Thyroid gland (tissue), 4 donors: ENCODE measurements at regions of chr13 and their contacts with region 1.

Region 1: GRCh38 chr13:27362064-27362883 is 62.1 kb upstream of the GTF3A start:
- DNase-seq: peak; percentile 80 to 86
- H3K4me3 ChIP-seq: peak overlapping the region in 2 of 3 donors; percentile 2 to 21
- H3K27ac ChIP-seq: no peak overlapping the region
- H3K4me1 ChIP-seq: peaks cover 0 to 3% of the 10 kb centered on the region in 2 donors
- H3K27me3 ChIP-seq: no peaks in the 10 kb centered on the region
- CTCF ChIP-seq: peak; percentile 69 to 96 (median 85)
- POLR2A ChIP-seq: no peak

Region 2: DNA sequence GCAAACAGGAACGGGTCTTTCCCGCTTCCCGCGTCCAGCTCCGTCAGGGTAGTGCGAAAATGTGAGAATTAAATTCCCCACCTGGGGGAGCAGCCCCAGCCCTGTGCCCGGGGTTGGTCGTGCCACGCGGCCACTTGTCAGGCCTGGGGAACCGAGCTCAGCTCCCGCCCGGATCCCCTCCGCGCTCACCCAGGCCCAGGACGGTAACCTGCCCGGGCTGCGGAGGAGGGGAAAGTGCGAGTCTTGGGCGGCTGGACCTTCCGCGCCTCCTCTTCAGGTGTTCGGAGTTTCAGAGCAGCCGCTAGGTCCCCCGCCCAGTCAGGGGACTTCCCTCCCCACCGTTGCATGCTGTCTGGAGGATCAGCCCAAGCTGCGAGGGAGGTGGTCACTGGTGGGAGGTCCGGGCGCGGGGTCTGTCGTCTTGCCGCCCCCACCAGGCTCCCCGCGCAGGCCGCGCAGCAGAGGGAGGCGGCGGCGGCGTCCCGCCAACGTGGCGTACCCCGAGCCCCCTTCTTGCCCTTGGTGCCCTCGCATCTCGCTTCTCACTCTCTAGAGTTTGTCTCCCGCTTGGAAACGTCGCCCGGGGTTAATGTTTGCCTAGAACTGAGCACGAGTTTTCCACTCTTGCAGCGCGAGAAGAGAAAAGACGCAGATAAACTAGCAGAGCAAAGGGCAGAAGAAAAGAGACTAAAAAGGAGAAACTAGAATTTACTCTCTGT is 618.2 kb after region 1 on chr13:
- intact Hi-C with region 1: loop called (anchors 5 kb)
- DNase-seq: no peak
- H3K4me3 ChIP-seq: no peak overlapping the region
- H3K27ac ChIP-seq: no peak overlapping the region
- H3K4me1 ChIP-seq: peaks cover 0 to 18% of the 10 kb centered on the region in 2 donors
- H3K27me3 ChIP-seq: peaks cover 39% of the 10 kb centered on the region
- CTCF ChIP-seq: no peak
- POLR2A ChIP-seq: no peak